Activated CD4-positive, alpha-beta T cell treated with anti-CD3 and anti-CD28 coated beads for 36 hours (primary cell): ENCODE measurements at regions of chr20 and their contacts with region 1.

Region 1: GRCh38 chr20:4014031-4014474 is 1.3 kb downstream of the RNF24 start:
- DNase-seq: peak; percentile 44
- ATAC-seq: peak; percentile 28
- H3K4me3 Mint-ChIP-seq: peak overlapping the region; percentile 92
- H3K27ac Mint-ChIP-seq: peak overlapping the region; percentile 83
- H3K4me1 Mint-ChIP-seq: peaks cover 37% of the 10 kb centered on the region
- H3K27me3 Mint-ChIP-seq: peaks cover 2% of the 10 kb centered on the region

Region 2: GRCh38 chr20:3786665-3787323 is 227.3 kb before region 1 on chr20 and contains the start of gene CENPB:
- CTCF ChIA-PET with region 1: no interaction called
- POLR2A ChIA-PET with region 1: no interaction called
- intact Hi-C with region 1: loop called in 1 of 2 experiments (anchors 1 kb)
- DNase-seq: peak; percentile 95
- ATAC-seq: peak; percentile 89
- H3K4me3 Mint-ChIP-seq: peak within 1 kb of the TSS; percentile 77
- H3K27ac Mint-ChIP-seq: peak within 1 kb of the TSS; percentile 84
- H3K4me1 Mint-ChIP-seq: peaks cover 39% of the 10 kb centered on the region
- H3K27me3 Mint-ChIP-seq: no peaks in the 10 kb centered on the region
- total RNA-seq, gene CENPB: 46.2 to 48.3 TPM

Region 3: DNA sequence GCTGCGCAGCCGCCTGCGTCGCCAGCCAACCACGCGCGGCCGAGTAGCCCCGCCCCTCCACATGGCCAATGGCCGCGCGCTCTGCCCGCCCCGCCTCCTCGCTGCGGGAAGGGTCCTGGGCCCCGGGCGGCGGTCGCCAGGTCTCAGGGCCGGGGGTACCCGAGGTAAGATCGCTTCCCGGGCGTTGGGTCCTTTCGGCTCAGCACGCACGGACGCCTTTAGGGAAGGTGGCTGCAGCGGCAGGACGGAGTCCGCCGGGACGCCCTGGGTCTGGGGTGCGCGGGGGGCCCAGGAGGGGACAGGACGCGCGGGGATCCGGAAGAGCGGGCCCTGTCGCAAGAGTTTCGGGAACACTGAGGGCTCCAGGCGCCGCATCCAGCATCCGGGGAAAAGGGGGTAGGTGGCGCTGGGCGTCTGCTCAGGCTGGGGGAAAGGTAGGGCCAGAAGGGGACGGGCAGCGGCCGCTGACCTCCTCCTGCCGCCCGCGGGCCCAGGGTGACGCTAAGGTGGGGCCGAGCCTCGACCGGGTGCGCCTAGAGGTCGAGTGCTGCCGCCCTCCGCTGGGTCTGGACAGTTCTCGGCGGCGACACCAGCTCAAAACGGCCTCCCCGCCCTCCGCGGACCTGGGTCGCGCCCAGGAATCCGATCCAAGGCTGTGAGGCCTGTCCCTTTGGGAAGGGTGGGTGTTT is 167.2 kb before region 1 on chr20 and contains the start of gene MAVS:
- CTCF ChIA-PET with region 1: interaction called, 4 read pairs
- POLR2A ChIA-PET with region 1: no interaction called
- intact Hi-C with region 1: loop called in 1 of 2 experiments (anchors 1 kb)
- DNase-seq: peak; percentile 91
- ATAC-seq: peak; percentile 98
- H3K4me3 Mint-ChIP-seq: peak within 1 kb of the TSS; percentile 88
- H3K27ac Mint-ChIP-seq: peak within 1 kb of the TSS; percentile 84
- H3K4me1 Mint-ChIP-seq: peaks cover 22% of the 10 kb centered on the region
- H3K27me3 Mint-ChIP-seq: no peaks in the 10 kb centered on the region
- total RNA-seq, gene MAVS: 23.2 to 25.9 TPM

Region 4: GRCh38 chr20:3911956-3912355 is 102.1 kb before region 1 on chr20:
- CTCF ChIA-PET with region 1: interaction called, 3 read pairs
- POLR2A ChIA-PET with region 1: no interaction called
- intact Hi-C with region 1: loop called in 1 of 2 experiments (anchors 5 kb)
- DNase-seq: no peak
- ATAC-seq: no peak
- H3K4me3 Mint-ChIP-seq: no peak overlapping the region
- H3K27ac Mint-ChIP-seq: peak overlapping the region; percentile 2
- H3K4me1 Mint-ChIP-seq: peaks cover 45% of the 10 kb centered on the region
- H3K27me3 Mint-ChIP-seq: no peaks in the 10 kb centered on the region

Region 5: DNA sequence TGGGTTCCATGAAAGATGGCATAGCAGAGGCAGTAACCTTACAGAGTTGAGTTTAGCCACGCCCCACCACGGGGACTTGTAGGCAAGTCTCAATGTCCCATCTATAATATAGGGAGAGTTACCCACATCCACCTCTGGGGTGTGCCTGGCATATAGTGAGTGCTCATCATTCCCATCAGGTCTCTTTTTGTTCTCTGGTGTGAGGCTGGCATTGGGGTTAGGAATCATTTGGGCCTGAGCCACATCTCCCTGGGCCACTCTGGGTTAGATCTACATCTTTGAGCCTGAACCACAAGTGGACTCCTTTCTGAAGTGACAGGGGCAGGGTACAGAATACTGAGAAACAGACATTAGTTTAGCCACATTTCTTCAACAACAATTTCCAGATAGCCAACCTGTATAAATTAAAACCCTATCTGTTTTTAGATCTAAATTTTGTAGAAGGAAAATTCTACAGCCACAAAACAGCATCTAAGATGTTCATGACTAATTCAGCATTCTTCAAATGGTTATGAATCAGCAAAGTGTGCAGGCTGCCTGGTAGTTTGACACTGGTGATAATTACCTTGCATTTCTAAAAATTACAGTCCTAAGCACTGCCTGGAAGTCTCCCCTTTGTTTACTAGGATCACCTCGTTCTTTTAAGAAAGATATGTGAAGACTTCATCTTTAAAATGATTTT is 18.8 kb before region 1 on chr20:
- CTCF ChIA-PET with region 1: interaction called, 9 read pairs
- POLR2A ChIA-PET with region 1: interaction called, 4 read pairs
- intact Hi-C with region 1: loop called in 1 of 2 experiments (anchors 1 kb)
- DNase-seq: peak; percentile 50
- ATAC-seq: peak; percentile 80
- H3K4me3 Mint-ChIP-seq: no peak overlapping the region
- H3K27ac Mint-ChIP-seq: peak overlapping the region; percentile 68
- H3K4me1 Mint-ChIP-seq: peaks cover 51% of the 10 kb centered on the region
- H3K27me3 Mint-ChIP-seq: no peaks in the 10 kb centered on the region

Region 6: GRCh38 chr20:4082406-4083097 is 68.5 kb after region 1 on chr20:
- CTCF ChIA-PET with region 1: interaction called, 16 read pairs
- POLR2A ChIA-PET with region 1: no interaction called
- intact Hi-C with region 1: loop called (anchors 1 kb)
- DNase-seq: peak; percentile 69
- ATAC-seq: peak; percentile 78
- H3K4me3 Mint-ChIP-seq: peak overlapping the region; percentile 9
- H3K27ac Mint-ChIP-seq: peak overlapping the region; percentile 87
- H3K4me1 Mint-ChIP-seq: peaks cover 41% of the 10 kb centered on the region
- H3K27me3 Mint-ChIP-seq: peaks cover 5% of the 10 kb centered on the region

Region 7: DNA sequence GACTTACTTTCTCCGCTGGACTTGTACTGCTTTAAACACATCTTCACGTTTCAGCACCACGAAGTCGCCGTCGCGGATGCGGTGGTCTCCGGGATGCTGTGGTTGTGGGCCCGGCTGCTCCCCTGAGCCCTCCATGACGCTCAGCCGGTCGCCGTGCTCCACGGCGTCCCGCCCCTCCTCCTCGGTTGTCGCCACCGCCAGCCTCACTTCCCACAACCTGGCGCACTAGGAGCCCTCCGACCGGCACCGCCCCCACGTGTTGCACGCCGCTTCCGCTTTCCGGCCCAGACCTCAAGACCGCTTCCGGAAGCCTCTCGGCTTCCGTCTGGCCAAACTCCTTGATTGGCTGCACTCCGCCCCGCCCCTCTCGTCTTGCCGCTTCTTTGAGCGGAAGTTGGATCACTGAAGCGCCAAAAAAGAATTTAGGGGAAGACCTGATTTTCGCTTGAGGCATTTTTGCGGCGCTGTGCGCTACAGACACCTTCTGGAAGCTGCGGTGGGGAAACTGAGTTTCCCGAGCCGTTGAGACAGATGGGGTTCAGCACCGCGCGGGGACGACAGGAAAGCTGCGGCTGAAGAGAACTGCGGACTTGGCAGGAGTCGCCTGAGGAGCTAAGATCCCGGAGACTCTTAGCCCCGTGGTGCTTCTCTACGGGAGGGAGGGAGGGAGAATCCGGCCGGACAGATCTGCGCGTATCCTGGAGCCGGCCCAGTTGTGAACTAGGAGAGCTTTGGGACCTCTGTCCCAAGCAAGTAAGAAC is 1936.4 kb after region 1 on chr20 and contains the starts of genes MCM8 and TRMT6:
- CTCF ChIA-PET with region 1: no interaction called
- POLR2A ChIA-PET with region 1: no interaction called
- intact Hi-C with region 1: loop called in 1 of 2 experiments (anchors 5 kb)
- DNase-seq: peak; percentile 98
- ATAC-seq: peak; percentile 87
- H3K4me3 Mint-ChIP-seq: peak within 1 kb of the TSS; percentile 95
- H3K27ac Mint-ChIP-seq: peak within 1 kb of the TSS; percentile 96
- H3K4me1 Mint-ChIP-seq: peaks cover 49% of the 10 kb centered on the region
- H3K27me3 Mint-ChIP-seq: no peaks in the 10 kb centered on the region
- total RNA-seq, gene MCM8: 42.5 to 45.4 TPM
- total RNA-seq, gene TRMT6: 20.9 to 27.3 TPM